OCI-LY7 (cell line): ENCODE measurements at regions of chr1 and their contacts with region 1.

Region 1: DNA sequence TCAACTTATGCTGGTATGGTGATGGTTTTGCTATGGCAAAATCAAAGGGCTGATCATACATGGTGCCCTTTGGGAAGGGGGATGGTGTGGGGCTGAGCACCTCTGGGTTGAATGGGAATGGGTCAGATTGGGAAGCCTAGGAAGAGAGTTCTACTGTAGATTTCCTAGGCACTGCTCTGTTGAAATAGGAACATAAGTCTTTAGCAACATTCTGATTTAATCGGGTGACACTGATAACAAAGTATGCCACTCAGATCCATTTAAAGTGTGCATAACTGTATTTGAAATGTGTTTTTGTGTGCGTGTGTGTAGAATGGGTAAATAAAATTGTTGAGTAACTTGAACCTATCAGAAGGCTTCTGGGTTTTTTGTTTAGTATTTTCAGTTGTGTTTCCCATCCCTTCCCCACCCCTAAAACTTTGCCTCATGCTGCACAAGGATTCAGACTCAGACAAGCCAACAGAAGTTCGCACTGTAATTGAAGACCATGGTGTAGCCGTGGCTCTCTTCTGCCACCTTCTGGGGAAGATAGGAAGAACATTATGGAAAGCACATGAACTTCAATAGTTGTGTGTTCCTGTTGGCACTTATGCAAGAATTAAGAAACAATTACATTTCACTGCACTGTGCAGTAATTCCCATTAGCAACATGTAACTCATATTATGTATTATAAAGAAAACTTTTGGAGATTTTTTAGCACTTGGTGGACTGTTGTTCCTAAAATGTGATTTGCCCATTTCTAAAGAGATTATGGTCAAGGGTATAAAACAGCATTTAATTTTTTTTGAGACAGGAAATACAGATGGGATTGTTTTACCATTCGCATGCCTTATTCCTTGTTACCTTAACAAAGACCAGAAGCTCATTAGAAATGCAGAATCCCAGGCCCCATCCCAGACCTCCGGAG is 10.9 kb upstream of the C4BPB start:
- DNase-seq: peak; percentile 75
- H3K4me3 ChIP-seq: no peak overlapping the region
- H3K27ac ChIP-seq: no peak overlapping the region
- H3K4me1 ChIP-seq: no peaks in the 10 kb centered on the region
- CTCF ChIP-seq: peak; percentile 93

Region 2: DNA sequence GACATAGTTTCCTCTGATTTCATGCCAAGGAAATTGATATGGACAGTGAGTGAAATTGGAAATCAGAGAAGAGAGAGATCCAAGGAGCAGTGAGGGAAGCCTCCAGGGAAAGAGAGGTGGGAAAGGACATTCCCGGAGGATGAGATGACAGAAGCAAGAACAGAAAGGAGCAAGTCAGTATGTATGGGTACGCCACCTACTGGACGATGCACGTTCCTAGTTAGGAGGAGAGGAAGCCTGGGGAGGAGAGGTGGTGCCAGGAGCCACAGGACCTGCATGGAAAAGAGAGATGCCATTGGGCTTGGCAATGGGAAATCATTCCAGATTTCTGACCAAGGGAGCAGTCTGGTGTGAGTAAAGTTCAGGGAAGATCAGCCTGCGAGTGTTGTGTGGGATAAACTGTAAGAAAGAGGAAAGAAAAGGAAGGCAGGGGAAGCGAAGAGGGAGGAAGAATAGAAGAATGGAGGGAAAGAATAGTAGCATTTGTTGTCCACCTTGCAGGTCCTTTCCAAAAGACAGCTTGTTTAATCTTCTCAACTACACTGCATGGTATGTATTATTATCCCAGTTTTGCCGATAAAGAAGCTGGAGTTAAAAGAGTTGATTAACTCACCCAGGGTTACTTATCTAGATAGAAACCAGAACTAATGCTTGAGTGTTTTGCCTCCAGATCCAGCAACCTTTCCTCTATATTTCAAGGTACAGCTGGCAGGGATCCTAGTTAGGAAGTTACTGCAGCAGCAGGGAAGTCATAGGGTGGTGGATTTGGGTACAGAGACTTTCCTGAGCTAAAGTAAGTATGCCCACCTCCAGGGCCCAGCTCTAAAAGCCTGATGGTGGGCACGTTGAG is 72.5 kb before region 1 on chr1:
- CTCF ChIA-PET with region 1: no interaction called
- POLR2A ChIA-PET with region 1: no interaction called
- intact Hi-C with region 1: loop called (anchors 10 kb)
- DNase-seq: peak; percentile 55
- H3K4me3 ChIP-seq: no peak overlapping the region
- H3K27ac ChIP-seq: no peak overlapping the region
- H3K4me1 ChIP-seq: no peaks in the 10 kb centered on the region
- CTCF ChIP-seq: peak; percentile 86

Region 3: GRCh38 chr1:207040181-207040533 is 37.6 kb before region 1 on chr1:
- CTCF ChIA-PET with region 1: no interaction called
- POLR2A ChIA-PET with region 1: interaction called, 4 read pairs
- intact Hi-C with region 1: loop called (anchors 5 kb)
- DNase-seq: no peak
- H3K4me3 ChIP-seq: no peak overlapping the region
- H3K27ac ChIP-seq: no peak overlapping the region
- H3K4me1 ChIP-seq: no peaks in the 10 kb centered on the region
- CTCF ChIP-seq: no peak